ENCODE measurements at regions of chr12 and their contacts with region 1.

Region 1: GRCh38 chr12:66169221-66170170 is at the start of gene TMBIM4:
- DNase-seq: peak; percentile 91 to 93
- H3K4me3 ChIP-seq: peak within 1 kb of the TSS; percentile 97
- H3K4me3 Mint-ChIP-seq: peak within 1 kb of the TSS; percentile 100
- H3K27ac Mint-ChIP-seq: peak within 1 kb of the TSS; percentile 99
- H3K4me1 ChIP-seq: no peaks in the 10 kb centered on the region
- H3K4me1 Mint-ChIP-seq: peaks cover 15% of the 10 kb centered on the region
- H3K27me3 ChIP-seq: no peaks in the 10 kb centered on the region
- H3K27me3 Mint-ChIP-seq: no peaks in the 10 kb centered on the region
- CTCF ChIP-seq: peak; percentile 58 to 59
- total RNA-seq, gene TMBIM4: 51.5 and 60.3 TPM in 2 replicates

Region 2: DNA sequence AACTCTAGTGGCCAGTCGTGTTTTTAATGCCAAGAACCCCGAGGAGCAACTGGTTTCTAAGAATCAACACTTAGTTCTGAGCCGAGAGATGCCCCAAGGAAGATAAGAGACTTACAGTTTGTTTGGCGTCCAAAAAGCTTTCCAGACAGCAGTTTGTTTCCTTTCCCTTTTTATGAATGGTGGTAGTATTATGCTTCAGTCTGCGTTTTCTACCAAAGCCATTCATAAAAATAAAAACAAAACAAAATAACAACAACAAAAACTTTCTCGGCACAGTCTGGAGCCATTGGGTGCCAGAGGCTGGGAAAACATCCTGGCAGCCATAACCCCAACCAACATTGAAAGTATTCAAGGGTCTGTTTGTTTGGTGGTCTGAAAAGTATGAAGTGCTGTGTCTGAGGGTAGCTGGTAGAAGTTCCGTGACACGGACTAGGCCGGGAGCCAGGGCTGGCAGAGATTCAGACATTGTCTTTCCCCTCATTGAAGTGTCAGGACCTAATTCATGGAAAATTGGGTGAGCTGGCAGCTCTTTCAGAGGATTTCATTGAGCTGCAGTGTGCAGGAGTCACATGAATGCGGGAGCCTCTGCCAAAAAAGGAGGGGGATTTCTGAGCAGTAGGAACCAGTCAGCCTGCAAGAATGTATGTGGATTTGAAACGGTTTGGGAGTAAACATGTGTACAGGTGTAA is 221.0 kb before region 1 on chr12:
- CTCF ChIA-PET with region 1: no interaction called
- POLR2A ChIA-PET with region 1: no interaction called
- intact Hi-C with region 1: no loop called
- DNase-seq: no peak
- H3K4me3 ChIP-seq: no peak overlapping the region
- H3K4me3 Mint-ChIP-seq: no peak overlapping the region
- H3K27ac Mint-ChIP-seq: no peak overlapping the region
- H3K4me1 ChIP-seq: peaks cover 26% of the 10 kb centered on the region
- H3K4me1 Mint-ChIP-seq: peaks cover 7% of the 10 kb centered on the region
- H3K27me3 ChIP-seq: no peaks in the 10 kb centered on the region
- H3K27me3 Mint-ChIP-seq: no peaks in the 10 kb centered on the region
- CTCF ChIP-seq: no peak

Region 3: DNA sequence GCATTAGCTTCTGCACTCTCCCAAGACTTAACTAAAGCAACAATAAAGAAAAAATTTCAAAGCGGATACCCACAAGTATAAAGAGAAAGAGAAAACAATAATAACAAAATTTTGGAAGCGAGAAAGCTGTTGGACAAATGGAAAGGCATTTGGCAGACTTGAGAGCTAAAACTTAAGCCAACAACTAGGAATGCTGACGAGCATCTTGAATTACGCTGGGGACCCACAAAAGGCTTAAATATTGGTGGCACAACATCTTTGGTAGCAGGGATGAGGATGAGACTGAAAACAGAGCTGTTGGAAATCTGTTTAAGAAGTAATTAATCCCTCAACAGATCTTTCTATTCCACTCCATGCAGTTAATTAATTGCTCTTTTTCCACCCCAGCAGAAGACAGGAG is 88.7 kb before region 1 on chr12:
- CTCF ChIA-PET with region 1: no interaction called
- POLR2A ChIA-PET with region 1: no interaction called
- intact Hi-C with region 1: no loop called
- DNase-seq: no peak
- H3K4me3 ChIP-seq: no peak overlapping the region
- H3K4me3 Mint-ChIP-seq: no peak overlapping the region
- H3K27ac Mint-ChIP-seq: no peak overlapping the region
- H3K4me1 ChIP-seq: peaks cover 18% of the 10 kb centered on the region
- H3K4me1 Mint-ChIP-seq: peaks cover 7% of the 10 kb centered on the region
- H3K27me3 ChIP-seq: no peaks in the 10 kb centered on the region
- H3K27me3 Mint-ChIP-seq: no peaks in the 10 kb centered on the region
- CTCF ChIP-seq: no peak

Region 4: DNA sequence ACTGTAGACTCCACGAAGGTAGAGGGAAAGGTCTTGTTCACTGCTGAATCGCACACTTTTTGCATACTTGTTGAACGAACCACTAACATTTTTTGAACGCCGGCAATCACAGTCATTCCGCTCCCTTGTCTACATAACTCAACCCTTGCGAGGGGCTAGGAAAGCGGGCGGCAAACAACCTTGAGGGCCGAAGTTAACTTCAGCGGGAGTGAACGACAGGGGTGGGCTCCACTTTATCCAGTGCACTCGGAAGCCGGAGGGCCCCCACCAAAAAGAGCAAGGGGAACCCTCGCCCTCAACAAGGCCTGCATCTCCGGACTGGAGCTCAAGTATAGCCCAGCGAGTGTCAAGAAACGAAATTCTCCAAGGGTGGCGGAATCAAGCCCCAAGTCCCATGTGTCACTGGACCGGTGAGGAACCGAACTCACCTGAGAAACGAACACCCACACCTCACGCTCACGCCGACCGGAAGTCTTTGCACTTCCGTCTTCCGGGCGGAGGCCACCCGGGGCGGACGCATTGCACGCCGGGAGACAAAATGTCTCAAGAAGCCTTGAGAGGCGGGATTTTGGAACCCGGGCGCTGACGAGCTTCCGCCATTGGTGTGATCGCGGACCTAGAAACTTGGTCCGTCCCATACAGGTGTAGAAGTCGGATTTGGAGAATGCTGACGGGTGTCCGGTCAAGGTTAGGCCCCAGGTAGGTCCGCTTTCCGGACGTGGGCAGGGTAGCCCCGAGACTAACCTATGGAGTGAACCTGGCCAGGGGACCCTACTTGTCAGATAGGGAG is 39.0 kb before region 1 on chr12 and contains the start of gene LLPH:
- CTCF ChIA-PET with region 1: interaction called, 4 read pairs
- POLR2A ChIA-PET with region 1: interaction called, 19 read pairs
- intact Hi-C with region 1: loop called (anchors 1 kb)
- DNase-seq: peak; percentile 91 to 93
- H3K4me3 ChIP-seq: peak within 1 kb of the TSS; percentile 81
- H3K4me3 Mint-ChIP-seq: peak within 1 kb of the TSS; percentile 81
- H3K27ac Mint-ChIP-seq: peak within 1 kb of the TSS; percentile 31
- H3K4me1 ChIP-seq: peaks cover 9% of the 10 kb centered on the region; the same call in 1 of the 2 replicates
- H3K4me1 Mint-ChIP-seq: peaks cover 20% of the 10 kb centered on the region
- H3K27me3 ChIP-seq: no peaks in the 10 kb centered on the region
- H3K27me3 Mint-ChIP-seq: no peaks in the 10 kb centered on the region
- CTCF ChIP-seq: no peak
- total RNA-seq, gene LLPH: 32.3 and 38.2 TPM in 2 replicates

Region 5: DNA sequence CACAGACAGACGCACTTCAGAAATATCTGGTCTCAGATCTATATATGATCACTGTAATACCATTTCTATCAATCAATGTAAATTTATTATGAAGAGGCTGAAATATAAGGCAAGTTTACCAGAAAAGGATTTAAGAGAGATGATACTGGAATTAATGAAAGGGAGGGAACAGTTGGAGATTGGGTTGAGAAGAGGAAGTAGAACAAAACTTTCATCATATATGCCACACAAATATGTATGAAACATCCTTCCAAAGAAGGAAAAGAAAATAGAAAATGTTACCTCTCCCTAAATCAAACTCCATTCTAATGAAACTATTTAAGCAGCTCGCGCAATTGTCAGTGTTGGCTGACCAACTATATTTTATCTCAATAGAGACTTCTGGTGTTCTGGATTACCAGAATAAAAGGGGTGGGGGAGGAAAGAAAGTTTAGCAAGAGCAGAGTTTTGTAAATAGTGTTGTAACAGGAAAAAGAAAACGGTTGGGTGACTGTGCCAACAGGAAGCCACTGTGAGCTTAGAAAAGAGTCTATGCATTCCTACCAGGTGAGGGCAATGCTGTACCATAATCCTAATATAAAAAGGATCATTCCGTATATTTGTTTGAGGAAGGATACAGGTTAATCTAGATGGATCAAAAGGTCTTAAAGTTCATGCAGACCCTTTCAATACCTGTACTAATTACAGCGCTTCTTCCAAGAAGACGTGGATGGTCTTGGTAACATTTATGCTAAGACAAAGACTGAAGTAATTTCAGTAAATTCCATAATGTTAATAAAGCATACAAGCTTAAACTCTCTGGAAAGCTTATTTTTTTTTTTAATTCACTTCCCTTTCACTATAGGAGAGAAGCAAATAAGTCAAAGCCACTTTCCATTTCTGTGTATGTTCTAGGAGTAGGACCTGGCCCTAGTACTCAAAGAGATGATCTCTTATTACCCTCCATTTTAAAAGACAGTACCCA is 24.4 kb before region 1 on chr12:
- CTCF ChIA-PET with region 1: interaction called, 16 read pairs
- POLR2A ChIA-PET with region 1: interaction called, 5 read pairs
- intact Hi-C with region 1: loop called (anchors 1 kb)
- DNase-seq: peak in 1 of 2 experiments; percentile 60
- H3K4me3 ChIP-seq: no peak overlapping the region
- H3K4me3 Mint-ChIP-seq: no peak overlapping the region
- H3K27ac Mint-ChIP-seq: no peak overlapping the region
- H3K4me1 ChIP-seq: 0 out of 2 replicates have a peak, but pooled peaks cover 4% of the 10 kb centered on the region
- H3K4me1 Mint-ChIP-seq: no peaks in the 10 kb centered on the region
- H3K27me3 ChIP-seq: no peaks in the 10 kb centered on the region
- H3K27me3 Mint-ChIP-seq: no peaks in the 10 kb centered on the region
- CTCF ChIP-seq: peak; percentile 60 to 61

Region 6: GRCh38 chr12:66159123-66159522 is 10.4 kb before region 1 on chr12:
- CTCF ChIA-PET with region 1: interaction called, 6 read pairs
- POLR2A ChIA-PET with region 1: interaction called, 12 read pairs
- intact Hi-C with region 1: no loop called
- DNase-seq: no peak
- H3K4me3 ChIP-seq: no peak overlapping the region
- H3K4me3 Mint-ChIP-seq: no peak overlapping the region
- H3K27ac Mint-ChIP-seq: no peak overlapping the region
- H3K4me1 ChIP-seq: no peaks in the 10 kb centered on the region
- H3K4me1 Mint-ChIP-seq: no peaks in the 10 kb centered on the region
- H3K27me3 ChIP-seq: no peaks in the 10 kb centered on the region
- H3K27me3 Mint-ChIP-seq: no peaks in the 10 kb centered on the region
- CTCF ChIP-seq: no peak

Region 7: DNA sequence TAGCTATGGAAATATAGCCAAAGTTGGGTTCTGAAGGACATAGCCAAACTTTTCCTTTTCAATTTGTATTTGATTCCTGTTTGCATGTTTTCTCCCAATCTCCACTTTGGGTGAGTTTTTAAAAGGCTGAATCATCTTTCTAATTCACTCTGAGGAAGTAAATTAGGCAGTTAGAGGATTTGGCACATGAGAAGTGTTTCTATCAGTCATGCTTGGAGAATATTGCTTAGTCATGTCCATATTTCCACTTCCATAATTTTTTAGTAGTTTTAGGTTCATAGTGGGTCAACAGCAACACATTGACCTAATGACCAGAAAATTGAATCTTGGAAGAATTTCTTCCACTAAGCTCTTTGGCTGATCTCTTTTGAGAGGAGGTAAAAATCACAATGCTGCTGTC is 41.3 kb after region 1 on chr12:
- CTCF ChIA-PET with region 1: interaction called, 7 read pairs
- POLR2A ChIA-PET with region 1: interaction called, 8 read pairs
- intact Hi-C with region 1: loop called (anchors 1 kb)
- DNase-seq: no peak
- H3K4me3 ChIP-seq: no peak overlapping the region
- H3K4me3 Mint-ChIP-seq: no peak overlapping the region
- H3K27ac Mint-ChIP-seq: no peak overlapping the region
- H3K4me1 ChIP-seq: peaks cover 18% of the 10 kb centered on the region
- H3K4me1 Mint-ChIP-seq: peaks cover 10% of the 10 kb centered on the region
- H3K27me3 ChIP-seq: no peaks in the 10 kb centered on the region
- H3K27me3 Mint-ChIP-seq: peaks cover 4% of the 10 kb centered on the region
- CTCF ChIP-seq: no peak

Region 8: GRCh38 chr12:66235626-66236281 is 66.3 kb after region 1 on chr12:
- CTCF ChIA-PET with region 1: interaction called, 10 read pairs
- POLR2A ChIA-PET with region 1: interaction called, 5 read pairs
- intact Hi-C with region 1: loop called (anchors 1 kb)
- DNase-seq: no peak
- H3K4me3 ChIP-seq: peak overlapping the region; percentile 45
- H3K4me3 Mint-ChIP-seq: peak overlapping the region; percentile 63
- H3K27ac Mint-ChIP-seq: no peak overlapping the region
- H3K4me1 ChIP-seq: peaks cover 15% of the 10 kb centered on the region
- H3K4me1 Mint-ChIP-seq: peaks cover 11% of the 10 kb centered on the region
- H3K27me3 ChIP-seq: no peaks in the 10 kb centered on the region
- H3K27me3 Mint-ChIP-seq: no peaks in the 10 kb centered on the region
- CTCF ChIP-seq: peak; percentile 4 to 17

Region 9: GRCh38 chr12:66269757-66270383 is 100.4 kb after region 1 on chr12:
- CTCF ChIA-PET with region 1: interaction called, 3 read pairs
- POLR2A ChIA-PET with region 1: interaction called, 3 read pairs
- intact Hi-C with region 1: loop called (anchors 1 kb)
- DNase-seq: no peak
- H3K4me3 ChIP-seq: no peak overlapping the region
- H3K4me3 Mint-ChIP-seq: no peak overlapping the region
- H3K27ac Mint-ChIP-seq: no peak overlapping the region
- H3K4me1 ChIP-seq: no peaks in the 10 kb centered on the region
- H3K4me1 Mint-ChIP-seq: no peaks in the 10 kb centered on the region
- H3K27me3 ChIP-seq: no peaks in the 10 kb centered on the region; the same call in 1 of the 2 replicates
- H3K27me3 Mint-ChIP-seq: peaks cover 7% of the 10 kb centered on the region
- CTCF ChIP-seq: peak; percentile 48 to 57